Ovary (tissue), 10 donors: ENCODE measurements at regions of chr17 and their contacts with region 1.

Region 1: DNA sequence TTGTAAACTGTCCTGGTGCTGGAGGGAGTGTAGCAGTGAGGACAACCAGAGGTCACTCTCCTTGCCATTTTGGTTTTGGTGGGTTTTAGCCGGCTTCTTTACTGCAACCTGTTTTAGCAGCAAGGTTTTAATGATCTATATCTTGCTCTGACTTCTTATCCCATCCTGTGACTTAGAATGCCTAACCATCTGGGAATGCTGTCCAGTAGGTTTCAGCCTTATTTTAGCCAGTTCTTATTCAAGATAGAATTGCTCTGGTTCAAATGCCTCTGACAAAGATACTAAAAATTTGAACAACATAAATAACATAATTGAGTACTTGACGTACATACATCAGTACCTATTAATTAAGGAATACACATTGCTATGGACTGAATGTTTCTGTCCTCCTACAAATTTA is 93.3 kb upstream of the TOM1L1 start:
- DNase-seq: no peak
- H3K4me3 ChIP-seq: no peak overlapping the region
- H3K27ac ChIP-seq: no peak overlapping the region
- H3K4me1 ChIP-seq: no peaks in the 10 kb centered on the region
- H3K27me3 ChIP-seq: no peaks in the 10 kb centered on the region
- CTCF ChIP-seq: no peak
- EP300 ChIP-seq: no peak
- POLR2A ChIP-seq: no peak

Region 2: DNA sequence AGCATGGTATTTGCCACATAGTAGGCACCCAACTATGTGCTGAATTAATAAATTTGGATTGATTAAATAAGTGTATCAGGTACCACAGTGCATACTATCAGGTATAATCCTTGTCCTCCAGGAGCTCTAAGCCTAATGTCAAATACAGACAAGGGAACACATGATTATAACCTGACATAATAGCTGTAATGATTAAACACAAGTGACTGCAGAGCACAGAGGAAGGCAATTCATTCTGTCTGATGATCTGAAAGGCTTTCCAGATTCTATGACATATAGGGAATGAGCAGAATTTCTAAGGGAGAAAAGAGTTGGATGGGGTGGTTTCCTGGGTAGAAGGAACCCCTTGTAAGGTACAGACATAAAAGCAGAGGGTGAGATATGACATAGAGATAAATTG is 711.1 kb before region 1 on chr17:
- intact Hi-C with region 1: no loop called
- DNase-seq: no peak
- H3K4me3 ChIP-seq: no peak overlapping the region
- H3K27ac ChIP-seq: no peak overlapping the region
- H3K4me1 ChIP-seq: no peaks in the 10 kb centered on the region
- H3K27me3 ChIP-seq: no peaks in the 10 kb centered on the region
- CTCF ChIP-seq: no peak
- EP300 ChIP-seq: no peak
- POLR2A ChIP-seq: no peak

Region 3: DNA sequence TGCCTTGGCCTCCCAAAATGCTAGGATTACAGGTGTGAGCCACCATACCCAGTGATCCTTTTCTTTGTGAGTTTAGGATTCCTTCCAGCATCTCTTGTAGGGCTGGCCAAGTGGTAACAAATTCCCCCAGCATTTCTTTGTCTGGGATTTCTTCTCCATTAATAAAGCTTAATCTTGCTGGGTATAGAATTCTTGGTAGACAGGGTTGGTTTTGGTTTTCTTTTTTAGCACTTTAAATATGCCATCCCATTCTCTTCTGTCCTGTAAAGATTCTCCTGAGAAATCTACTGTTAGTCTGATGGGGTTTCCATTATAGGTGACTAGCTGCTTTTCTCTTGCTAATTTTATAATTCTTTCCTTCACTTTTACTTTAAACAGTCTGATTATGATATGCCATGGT is 79.7 kb before region 1 on chr17:
- intact Hi-C with region 1: no loop called
- DNase-seq: no peak
- H3K4me3 ChIP-seq: no peak overlapping the region
- H3K27ac ChIP-seq: no peak overlapping the region
- H3K4me1 ChIP-seq: no peaks in the 10 kb centered on the region
- H3K27me3 ChIP-seq: no peaks in the 10 kb centered on the region
- CTCF ChIP-seq: no peak
- EP300 ChIP-seq: no peak
- POLR2A ChIP-seq: no peak

Region 4: GRCh38 chr17:54784305-54784704 is 23.0 kb before region 1 on chr17:
- intact Hi-C with region 1: no loop called
- DNase-seq: no peak
- H3K4me3 ChIP-seq: no peak overlapping the region
- H3K27ac ChIP-seq: no peak overlapping the region
- H3K4me1 ChIP-seq: no peaks in the 10 kb centered on the region
- H3K27me3 ChIP-seq: no peaks in the 10 kb centered on the region
- CTCF ChIP-seq: no peak
- EP300 ChIP-seq: no peak
- POLR2A ChIP-seq: no peak

Region 5: DNA sequence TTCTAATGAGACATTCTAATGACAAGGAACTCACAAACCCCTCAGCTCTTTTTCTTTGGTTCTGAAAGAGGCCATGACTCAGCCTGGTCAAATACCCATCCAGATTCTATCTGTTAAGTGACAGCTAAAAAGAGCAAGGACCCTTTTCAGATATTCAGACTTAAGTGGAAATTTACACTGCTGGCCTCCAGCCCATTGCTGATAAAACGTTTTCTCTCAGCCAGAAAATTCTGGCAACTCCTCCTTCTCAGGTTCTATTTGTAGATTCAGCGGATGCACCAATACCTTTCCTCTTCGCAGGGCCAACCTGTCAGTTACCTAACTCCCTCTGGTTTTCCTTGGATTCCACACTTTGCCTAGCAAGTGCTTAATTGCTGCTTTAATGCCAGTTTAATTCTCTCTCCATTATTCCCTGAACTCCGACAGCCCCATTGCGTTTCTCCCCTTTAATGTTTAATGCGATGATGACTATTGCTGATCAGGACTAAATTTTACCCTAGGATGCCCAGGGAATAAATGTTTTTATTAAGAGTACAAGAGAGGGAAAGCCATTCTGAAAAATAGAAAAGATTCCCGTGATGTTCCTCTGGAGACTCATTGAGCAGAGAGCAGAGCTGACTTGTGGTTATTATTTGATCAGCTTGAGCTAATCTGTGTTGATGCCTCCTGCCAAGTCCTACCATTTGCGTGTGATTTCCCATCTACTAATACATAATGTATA is 57.5 kb after region 1 on chr17:
- intact Hi-C with region 1: loop called in 1 of 4 experiments (anchors 10 kb)
- DNase-seq: no peak
- H3K4me3 ChIP-seq: no peak overlapping the region
- H3K27ac ChIP-seq: no peak overlapping the region
- H3K4me1 ChIP-seq: no peaks in the 10 kb centered on the region
- H3K27me3 ChIP-seq: no peaks in the 10 kb centered on the region
- CTCF ChIP-seq: no peak
- EP300 ChIP-seq: no peak
- POLR2A ChIP-seq: no peak